Upper lobe of right lung (tissue), 1 donor: ENCODE measurements at regions of chr18 and their contacts with region 1.

Region 1: DNA sequence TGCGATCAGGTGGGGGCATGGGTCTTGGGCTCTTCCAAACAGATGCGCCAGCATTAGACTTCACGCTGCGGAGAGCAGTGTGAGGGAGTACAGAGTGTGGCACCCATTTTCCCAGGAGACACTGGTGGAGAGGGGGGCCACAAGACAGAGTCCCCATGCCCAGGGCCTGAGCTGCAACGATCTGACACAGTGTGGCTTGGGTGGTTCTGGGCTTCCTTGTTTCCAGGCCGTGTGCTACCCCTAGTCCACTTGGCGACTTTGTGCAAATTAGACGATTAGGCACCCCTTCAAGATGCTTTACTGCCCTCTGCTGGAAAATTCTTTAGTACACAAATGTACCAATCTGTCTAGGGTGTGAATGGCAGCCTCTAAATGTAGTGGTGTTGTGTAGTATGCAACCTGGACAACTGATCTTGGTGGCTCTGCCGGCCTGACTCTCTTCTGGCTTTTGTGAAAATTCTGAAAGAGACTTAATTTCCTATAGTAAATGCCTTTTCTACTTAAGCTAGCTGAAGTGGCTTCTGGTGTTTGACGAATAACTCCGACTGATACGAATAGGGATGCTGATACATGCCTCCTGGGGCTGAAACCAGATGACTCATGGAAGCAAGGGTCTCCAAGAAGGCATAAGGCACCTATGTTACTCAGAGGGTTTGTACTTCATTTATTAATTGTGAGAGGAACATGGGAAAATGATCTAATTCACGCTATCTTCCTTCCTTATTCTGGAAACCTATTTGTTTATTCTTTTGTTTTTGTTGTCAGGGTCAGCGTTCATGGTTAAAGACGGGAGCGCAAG is 92.3 kb upstream of the SMAD2 start:
- DNase-seq: no peak
- ATAC-seq: peak; percentile 87
- H3K4me3 ChIP-seq: no peak overlapping the region
- H3K27ac ChIP-seq: no peak overlapping the region
- H3K4me1 ChIP-seq: peaks cover 27% of the 10 kb centered on the region
- H3K27me3 ChIP-seq: no peaks in the 10 kb centered on the region
- CTCF ChIP-seq: peak; percentile 66

Region 2: GRCh38 chr18:47772374-47773248 is 250.1 kb before region 1 on chr18:
- intact Hi-C with region 1: loop called (anchors 10 kb)
- DNase-seq: peak; percentile 90
- ATAC-seq: peak; percentile 96
- H3K4me3 ChIP-seq: no peak overlapping the region
- H3K27ac ChIP-seq: no peak overlapping the region
- H3K4me1 ChIP-seq: no peaks in the 10 kb centered on the region
- H3K27me3 ChIP-seq: no peaks in the 10 kb centered on the region
- CTCF ChIP-seq: peak; percentile 89